ENCODE measurements at regions of chr9 and their contacts with region 1.

Region 1: GRCh38 chr9:92342825-92343488 is 17.2 kb downstream of the CENPP start:
- DNase-seq: no peak
- ATAC-seq: no peak

Region 2: DNA sequence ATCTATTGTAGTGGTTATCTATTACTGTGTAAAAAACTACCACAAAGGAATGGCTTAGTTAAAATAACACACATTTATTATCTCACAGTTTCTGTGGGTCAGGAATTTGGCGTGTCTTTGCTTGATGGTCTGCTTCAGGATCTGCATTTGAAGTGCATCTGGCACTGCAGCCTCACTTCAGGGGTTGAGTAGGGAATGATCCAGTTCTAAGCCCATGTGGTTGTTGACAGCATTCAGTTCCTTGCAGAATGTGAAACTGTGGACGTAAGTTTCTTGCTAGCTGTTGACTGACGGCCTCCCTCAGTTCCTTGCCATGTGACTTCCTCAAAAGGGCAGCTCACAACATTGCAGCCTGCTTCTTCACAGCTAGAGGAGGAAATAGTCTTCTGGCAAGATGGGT is 63.5 kb after region 1 on chr9:
- intact Hi-C with region 1: loop called (anchors 10 kb)
- DNase-seq: no peak
- ATAC-seq: peak; percentile 82

Region 3: DNA sequence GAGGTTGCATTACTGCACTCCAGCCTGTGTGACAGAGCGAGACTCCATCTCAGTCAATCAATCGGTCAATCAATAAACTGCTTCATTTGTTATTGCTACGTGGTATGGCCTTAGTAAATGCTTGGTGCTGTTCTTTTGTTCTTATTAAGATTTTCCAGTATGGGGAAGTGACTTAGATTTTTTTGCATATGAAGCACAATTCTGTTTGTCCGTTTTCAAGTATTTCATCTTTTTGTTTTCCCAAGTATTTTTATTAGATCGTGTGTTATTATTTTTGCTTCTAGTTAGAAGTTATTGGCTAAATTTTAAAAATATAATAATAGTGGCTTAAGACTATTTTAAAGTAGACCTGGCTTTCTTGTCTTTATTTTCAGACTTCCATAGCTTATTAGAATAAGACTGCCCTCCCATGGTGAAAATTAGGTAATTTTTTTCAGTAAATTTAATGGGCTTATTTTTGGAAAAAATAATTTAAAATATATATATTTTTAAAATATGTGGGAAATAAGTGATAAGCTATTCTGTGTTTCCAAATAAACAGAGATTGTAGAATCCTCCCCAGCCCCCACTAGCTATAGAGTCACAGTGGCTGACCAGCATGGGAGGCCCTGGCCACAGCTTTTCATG is 96.1 kb after region 1 on chr9:
- intact Hi-C with region 1: loop called (anchors 10 kb)
- DNase-seq: no peak
- ATAC-seq: no peak

Region 4: GRCh38 chr9:92634712-92635605 is 292.0 kb after region 1 on chr9:
- intact Hi-C with region 1: loop called (anchors 2 kb)
- DNase-seq: peak; percentile 88
- ATAC-seq: peak; percentile 94

Measured in Right ventricle myocardium superior (tissue), 1 donor.